ENCODE measurements at regions of chr11 and their contacts with region 1.

Region 1: DNA sequence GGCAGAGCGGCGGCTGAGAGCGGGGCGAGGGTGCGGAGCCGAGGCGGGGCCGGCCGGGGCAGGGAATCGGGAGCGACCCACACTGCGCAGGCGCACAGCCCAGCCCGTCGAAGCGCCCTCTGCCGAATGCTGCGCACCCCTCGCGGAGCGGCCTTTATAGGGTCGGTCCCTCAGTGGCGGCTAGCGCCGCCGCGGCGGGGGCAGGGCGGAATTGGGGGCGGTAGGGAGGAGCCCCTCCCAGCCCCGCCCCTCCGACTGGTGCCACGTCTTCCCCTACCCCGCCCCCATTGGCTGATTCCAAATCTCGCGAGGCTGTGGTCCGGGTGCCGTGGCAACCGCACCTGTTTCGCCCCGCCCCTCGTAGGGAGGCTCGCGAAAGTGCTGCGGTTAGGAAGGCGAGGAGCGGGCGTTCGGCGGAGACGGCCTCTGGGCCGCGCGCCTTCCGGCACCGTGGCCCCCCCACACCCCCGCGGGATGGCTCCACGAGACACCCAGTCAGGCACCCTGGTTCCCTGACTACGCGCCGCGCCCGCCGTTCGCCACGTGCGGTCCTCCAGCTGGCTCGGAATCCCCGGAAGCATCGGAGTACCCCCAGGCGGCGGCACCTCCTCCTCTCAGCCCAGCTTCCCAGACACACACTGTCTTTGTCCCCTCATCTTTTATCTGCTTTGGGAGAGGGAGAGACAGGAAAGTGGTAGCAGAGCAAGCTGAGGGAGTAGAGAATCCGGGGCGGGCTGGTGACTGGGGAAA is at the start of gene EHD1:
- DNase-seq: peak; percentile 99
- H3K4me3 ChIP-seq: peak within 1 kb of the TSS; percentile 93
- H3K4me3 Mint-ChIP-seq: peak within 1 kb of the TSS; percentile 85
- H3K27ac Mint-ChIP-seq: peak within 1 kb of the TSS; percentile 82
- H3K4me1 ChIP-seq: peaks cover 26% of the 10 kb centered on the region
- H3K4me1 Mint-ChIP-seq: peaks cover 7% of the 10 kb centered on the region
- H3K27me3 ChIP-seq: no peaks in the 10 kb centered on the region
- H3K27me3 Mint-ChIP-seq: no peaks in the 10 kb centered on the region
- CTCF ChIP-seq: peak in 1 of 2 experiments; percentile 75
- total RNA-seq, gene EHD1: 123 and 129 TPM in 2 replicates

Region 2: GRCh38 chr11:64864473-64865285 is 14.0 kb before region 1 on chr11:
- CTCF ChIA-PET with region 1: interaction called, 6 read pairs
- POLR2A ChIA-PET with region 1: interaction called, 5 read pairs
- intact Hi-C with region 1: loop called (anchors 2 kb)
- DNase-seq: peak in 1 of 2 experiments; percentile 42
- H3K4me3 ChIP-seq: no peak overlapping the region
- H3K4me3 Mint-ChIP-seq: no peak overlapping the region
- H3K27ac Mint-ChIP-seq: peak overlapping the region; percentile 76
- H3K4me1 ChIP-seq: peaks cover 55% of the 10 kb centered on the region
- H3K4me1 Mint-ChIP-seq: peaks cover 16% of the 10 kb centered on the region
- H3K27me3 ChIP-seq: no peaks in the 10 kb centered on the region
- H3K27me3 Mint-ChIP-seq: no peaks in the 10 kb centered on the region
- CTCF ChIP-seq: no peak

Region 3: GRCh38 chr11:65055538-65055937 is 176.9 kb after region 1 on chr11:
- CTCF ChIA-PET with region 1: interaction called, 11 read pairs
- POLR2A ChIA-PET with region 1: no interaction called
- intact Hi-C with region 1: no loop called
- DNase-seq: no peak
- H3K4me3 ChIP-seq: no peak overlapping the region
- H3K4me3 Mint-ChIP-seq: no peak overlapping the region
- H3K27ac Mint-ChIP-seq: no peak overlapping the region
- H3K4me1 ChIP-seq: no peaks in the 10 kb centered on the region
- H3K4me1 Mint-ChIP-seq: no peaks in the 10 kb centered on the region
- H3K27me3 ChIP-seq: no peaks in the 10 kb centered on the region
- H3K27me3 Mint-ChIP-seq: peaks cover 3% of the 10 kb centered on the region
- CTCF ChIP-seq: no peak

Measured in Caco-2 (cell line).